H1 (cell line): ENCODE measurements at regions of chr10 and their contacts with region 1.

Region 1: GRCh38 chr10:89369156-89370105 is 8.4 kb upstream of the IFIT1B start:
- DNase-seq: no peak
- H3K4me3 ChIP-seq: no peak overlapping the region
- H3K27ac ChIP-seq: no peak overlapping the region
- H3K4me1 ChIP-seq: peaks cover 0 to 6% (median 0%) of the 10 kb centered on the region in 4 experiments; a peak in 1 of 7 replicates
- H3K27me3 ChIP-seq: no peaks in the 10 kb centered on the region
- CTCF ChIP-seq: peak in 2 of 3 experiments; percentile 29 to 49; a peak in 2 of 4 replicates
- EP300 ChIP-seq: no peak
- POLR2A ChIP-seq: no peak
- RAD21 ChIP-seq: peak; percentile 50 to 51

Region 2: DNA sequence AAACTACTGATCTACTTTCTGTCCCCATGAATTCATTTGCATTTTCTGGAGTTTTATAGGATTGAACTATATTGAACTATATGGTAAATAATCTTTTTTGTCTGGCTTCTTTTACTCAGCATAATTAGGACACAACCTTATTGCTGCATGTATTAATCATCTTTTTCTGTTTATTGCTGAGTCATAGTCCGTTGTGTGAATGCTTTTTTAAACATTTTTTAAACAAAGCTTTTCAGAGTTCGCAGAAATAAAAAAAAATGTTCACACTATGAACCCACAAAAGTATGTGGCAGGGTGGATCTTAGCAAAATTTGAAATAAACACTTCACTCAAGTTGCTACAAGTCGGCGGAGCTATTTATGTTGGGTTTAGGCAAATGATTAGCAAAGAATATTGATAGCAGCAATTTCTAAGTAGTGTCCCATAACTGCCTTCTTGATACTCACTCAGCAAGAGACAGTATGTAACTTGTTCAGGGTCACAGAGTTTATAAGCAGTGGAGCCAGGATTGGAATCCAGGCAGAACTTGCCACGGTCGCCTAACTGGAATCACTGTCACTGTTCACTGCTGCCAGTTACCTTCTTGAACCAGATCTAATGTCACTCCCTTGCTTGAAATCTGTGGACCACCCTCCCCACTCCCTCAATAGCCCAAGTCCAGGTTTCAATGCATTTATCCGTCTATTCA is 167.9 kb before region 1 on chr10:
- CTCF ChIA-PET with region 1: no interaction called
- POLR2A ChIA-PET with region 1: no interaction called
- DNase-seq: no peak
- H3K4me3 ChIP-seq: no peak overlapping the region
- H3K27ac ChIP-seq: no peak overlapping the region
- H3K4me1 ChIP-seq: peaks cover 0 to 3% (median 3%) of the 10 kb centered on the region in 4 experiments; a peak in 6 of 7 replicates
- H3K27me3 ChIP-seq: peaks cover 2 to 16% (median 10%) of the 10 kb centered on the region in 4 experiments
- CTCF ChIP-seq: no peak
- EP300 ChIP-seq: no peak
- POLR2A ChIP-seq: no peak
- RAD21 ChIP-seq: no peak

Region 3: GRCh38 chr10:89269433-89270152 is 99.8 kb before region 1 on chr10:
- CTCF ChIA-PET with region 1: interaction called, 44 read pairs
- POLR2A ChIA-PET with region 1: no interaction called
- DNase-seq: no peak
- H3K4me3 ChIP-seq: no peak overlapping the region
- H3K27ac ChIP-seq: no peak overlapping the region
- H3K4me1 ChIP-seq: no peaks in the 10 kb centered on the region
- H3K27me3 ChIP-seq: no peaks in the 10 kb centered on the region
- CTCF ChIP-seq: no peak
- EP300 ChIP-seq: no peak
- POLR2A ChIP-seq: no peak
- RAD21 ChIP-seq: no peak

Region 4: DNA sequence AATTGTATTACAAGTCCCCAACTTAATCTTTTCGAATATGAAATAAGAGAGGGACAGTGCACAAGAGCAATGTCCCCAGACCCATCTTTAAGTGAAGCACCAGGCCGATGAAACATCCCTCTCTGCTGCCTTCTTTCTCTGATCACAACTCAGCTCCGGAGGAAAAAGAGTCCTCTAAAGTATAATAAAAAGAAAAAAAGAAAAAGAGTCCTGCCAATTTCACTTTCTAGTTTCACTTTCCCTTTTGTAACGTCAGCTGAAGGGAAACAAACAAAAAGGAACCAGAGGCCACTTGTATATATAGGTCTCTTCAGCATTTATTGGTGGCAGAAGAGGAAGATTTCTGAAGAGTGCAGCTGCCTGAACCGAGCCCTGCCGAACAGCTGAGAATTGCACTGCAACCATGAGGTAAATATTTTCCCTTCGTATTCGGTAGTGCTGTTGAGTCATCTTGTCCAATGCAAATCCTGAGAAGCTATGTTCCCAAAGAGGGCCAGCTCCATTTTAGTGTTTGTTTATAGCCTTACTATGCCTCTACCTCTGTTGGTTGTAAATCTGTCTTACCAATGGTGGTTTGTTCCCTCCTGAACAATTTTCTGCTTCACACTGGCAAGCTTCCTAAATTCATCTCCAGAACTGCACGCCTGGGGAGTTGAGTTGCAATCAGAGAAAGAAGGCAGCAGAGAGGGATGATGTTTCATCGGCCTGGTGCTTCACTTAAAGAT is 67.5 kb before region 1 on chr10 and contains the start of gene IFIT2:
- CTCF ChIA-PET with region 1: interaction called, 60 read pairs
- POLR2A ChIA-PET with region 1: no interaction called
- DNase-seq: no peak
- H3K4me3 ChIP-seq: no peak within 1 kb of the TSS
- H3K27ac ChIP-seq: no peak within 1 kb of the TSS
- H3K4me1 ChIP-seq: peaks cover 0 to 3% (median 1%) of the 10 kb centered on the region in 4 experiments; a peak in 2 of 7 replicates
- H3K27me3 ChIP-seq: no peaks in the 10 kb centered on the region
- CTCF ChIP-seq: no peak
- EP300 ChIP-seq: no peak
- POLR2A ChIP-seq: no peak
- RAD21 ChIP-seq: no peak
- total RNA-seq, gene IFIT2: 0.35 and 0.40 TPM in 2 replicates

Region 5: GRCh38 chr10:89346264-89347254 is 22.9 kb before region 1 on chr10:
- CTCF ChIA-PET with region 1: interaction called, 64 read pairs
- POLR2A ChIA-PET with region 1: no interaction called
- DNase-seq: no peak
- H3K4me3 ChIP-seq: no peak overlapping the region
- H3K27ac ChIP-seq: peak overlapping the region; percentile 41; the same call in 1 of the 2 replicates
- H3K4me1 ChIP-seq: peaks cover 7 to 26% (median 18%) of the 10 kb centered on the region in 4 experiments; a peak in 6 of 7 replicates
- H3K27me3 ChIP-seq: no peaks in the 10 kb centered on the region
- CTCF ChIP-seq: no peak
- EP300 ChIP-seq: no peak
- POLR2A ChIP-seq: no peak
- RAD21 ChIP-seq: no peak

Region 6: GRCh38 chr10:89391917-89392756 is 22.7 kb after region 1 on chr10 and contains the start of gene IFIT1:
- CTCF ChIA-PET with region 1: interaction called, 30 read pairs
- POLR2A ChIA-PET with region 1: no interaction called
- DNase-seq: no peak
- H3K4me3 ChIP-seq: peak within 1 kb of the TSS; percentile 28 to 56 (median 40); a peak in 5 of 8 replicates
- H3K27ac ChIP-seq: no peak within 1 kb of the TSS
- H3K4me1 ChIP-seq: peaks cover 0 to 5% (median 3%) of the 10 kb centered on the region in 4 experiments; a peak in 2 of 7 replicates
- H3K27me3 ChIP-seq: no peaks in the 10 kb centered on the region
- CTCF ChIP-seq: no peak
- EP300 ChIP-seq: no peak
- POLR2A ChIP-seq: no peak
- RAD21 ChIP-seq: no peak
- total RNA-seq, gene IFIT1: 1.5 and 1.8 TPM in 2 replicates

Region 7: DNA sequence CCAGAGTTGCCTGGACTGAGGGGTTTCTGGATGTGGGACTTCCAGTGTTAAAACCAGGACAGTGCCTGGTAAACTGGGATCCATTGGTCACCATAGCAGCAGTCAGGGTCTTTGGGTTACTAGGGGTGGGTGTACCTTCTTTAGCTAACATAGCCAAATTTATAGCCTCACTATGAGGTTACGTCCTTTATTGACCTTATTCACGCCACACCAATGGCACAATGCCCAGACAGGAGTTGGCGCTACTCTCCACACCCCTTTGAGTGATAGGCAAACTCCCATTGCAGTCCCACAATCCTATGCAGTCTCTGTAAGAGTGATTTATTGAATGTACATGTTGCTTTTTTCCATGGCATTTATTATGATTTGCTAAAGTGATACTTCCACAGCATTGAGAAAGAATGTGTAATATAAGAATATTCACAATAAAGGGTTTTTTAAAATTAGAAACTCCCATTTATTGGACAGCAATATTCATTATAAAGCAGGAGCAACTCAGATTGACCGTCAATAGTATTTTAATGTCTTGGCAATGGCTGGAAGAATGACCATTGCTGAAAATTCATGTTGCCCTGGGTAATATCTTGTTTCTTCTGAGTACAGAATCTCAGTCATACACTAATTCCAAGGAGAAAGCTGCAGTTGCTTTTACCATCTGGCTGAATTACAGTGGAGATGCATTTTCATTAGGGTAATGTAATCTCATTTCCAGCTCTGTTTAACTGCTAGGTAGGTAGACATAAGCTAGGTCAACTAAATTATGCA is 71.0 kb after region 1 on chr10:
- CTCF ChIA-PET with region 1: no interaction called
- POLR2A ChIA-PET with region 1: no interaction called
- DNase-seq: no peak
- H3K4me3 ChIP-seq: no peak overlapping the region
- H3K27ac ChIP-seq: no peak overlapping the region
- H3K4me1 ChIP-seq: no peaks in the 10 kb centered on the region
- H3K27me3 ChIP-seq: no peaks in the 10 kb centered on the region; a peak in 1 of 7 replicates
- CTCF ChIP-seq: no peak
- EP300 ChIP-seq: no peak
- POLR2A ChIP-seq: no peak
- RAD21 ChIP-seq: no peak

Region 8: DNA sequence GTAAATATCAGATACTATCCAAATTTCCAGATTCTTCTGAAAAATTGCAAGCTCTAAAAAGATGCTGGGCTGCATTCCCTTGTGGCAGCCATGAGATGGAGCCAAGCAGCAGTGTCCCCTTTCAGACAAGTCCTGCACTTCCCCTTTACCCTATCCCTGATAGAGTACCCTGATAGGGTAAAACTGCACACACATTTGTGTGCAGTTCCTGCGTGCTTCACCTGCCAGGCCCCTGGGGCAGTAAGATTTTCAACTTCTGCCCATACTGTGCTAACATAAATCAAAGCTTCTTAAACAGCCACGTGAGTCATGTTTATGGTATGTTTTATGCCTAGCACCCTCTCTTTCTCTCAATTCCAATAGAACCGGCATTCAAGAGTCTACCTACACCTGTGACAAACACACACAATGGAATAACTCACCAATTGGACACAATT is 97.2 kb after region 1 on chr10:
- CTCF ChIA-PET with region 1: no interaction called
- POLR2A ChIA-PET with region 1: no interaction called
- DNase-seq: no peak
- H3K4me3 ChIP-seq: no peak overlapping the region
- H3K27ac ChIP-seq: no peak overlapping the region
- H3K4me1 ChIP-seq: no peaks in the 10 kb centered on the region; a peak in 1 of 7 replicates
- H3K27me3 ChIP-seq: no peaks in the 10 kb centered on the region
- CTCF ChIP-seq: peak; percentile 55 to 71 (median 57)
- EP300 ChIP-seq: no peak
- POLR2A ChIP-seq: no peak
- RAD21 ChIP-seq: peak; percentile 75 to 76